CD8-positive, alpha-beta T cell (primary cell): ENCODE measurements at regions of chr21 and their contacts with region 1.

Region 1: DNA sequence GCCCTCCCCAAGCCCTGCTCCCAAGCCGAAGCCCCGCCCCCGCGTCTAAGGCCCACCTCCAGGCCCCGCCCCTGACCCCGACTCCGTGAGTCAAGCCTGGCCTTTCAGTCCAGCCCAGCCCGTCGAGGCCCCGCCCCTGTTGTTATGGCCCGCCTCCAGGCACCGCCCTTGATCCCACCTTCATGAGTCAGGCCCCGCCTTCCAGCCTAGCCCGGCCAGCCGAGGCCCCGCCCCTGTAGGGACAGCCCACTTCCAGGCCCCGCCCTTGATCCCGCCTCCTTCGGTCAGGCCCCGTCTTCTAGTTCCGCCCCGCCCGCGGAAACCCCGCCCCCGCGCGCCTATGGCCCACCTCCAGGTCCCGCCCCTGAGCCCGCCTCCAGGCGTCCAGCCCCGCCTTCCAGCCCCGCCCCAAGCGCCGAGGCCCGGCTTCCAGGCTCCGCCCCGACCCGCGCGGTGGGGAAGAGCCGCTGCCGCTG is 247 bp upstream of the DOP1B start:
- DNase-seq: peak; percentile 98 to 100 (median 100)
- ATAC-seq: peak; percentile 89
- H3K4me3 ChIP-seq: peak overlapping the region; percentile 76 to 78
- H3K4me3 Mint-ChIP-seq: peak overlapping the region; percentile 83
- H3K27ac ChIP-seq: peak overlapping the region; percentile 65 to 68
- H3K27ac Mint-ChIP-seq: peak overlapping the region; percentile 72
- H3K4me1 ChIP-seq: peaks cover 24% of the 10 kb centered on the region
- H3K4me1 Mint-ChIP-seq: peaks cover 33% of the 10 kb centered on the region
- H3K27me3 ChIP-seq: no peaks in the 10 kb centered on the region
- H3K27me3 Mint-ChIP-seq: no peaks in the 10 kb centered on the region
- CTCF ChIP-seq: no peak

Region 2: GRCh38 chr21:35051287-35051818 is 1105.0 kb before region 1 on chr21:
- CTCF ChIA-PET with region 1: no interaction called
- POLR2A ChIA-PET with region 1: no interaction called
- intact Hi-C with region 1: no loop called
- DNase-seq: peak; percentile 68 to 94 (median 84)
- ATAC-seq: peak; percentile 41
- H3K4me3 ChIP-seq: no peak overlapping the region
- H3K4me3 Mint-ChIP-seq: peak overlapping the region; percentile 95
- H3K27ac ChIP-seq: peak overlapping the region in 1 of 2 experiments; percentile 79
- H3K27ac Mint-ChIP-seq: peak overlapping the region; percentile 97
- H3K4me1 ChIP-seq: peaks cover 29% of the 10 kb centered on the region
- H3K4me1 Mint-ChIP-seq: peaks cover 49% of the 10 kb centered on the region
- H3K27me3 ChIP-seq: no peaks in the 10 kb centered on the region
- H3K27me3 Mint-ChIP-seq: no peaks in the 10 kb centered on the region
- CTCF ChIP-seq: peak; percentile 58

Region 3: GRCh38 chr21:36069713-36070573 is 86.4 kb before region 1 on chr21 and contains the start of gene CBR1:
- CTCF ChIA-PET with region 1: interaction called, 3 read pairs
- POLR2A ChIA-PET with region 1: no interaction called
- intact Hi-C with region 1: loop called in 1 of 2 experiments (anchors 1 kb)
- DNase-seq: peak; percentile 69 to 94 (median 85)
- ATAC-seq: peak; percentile 98
- H3K4me3 ChIP-seq: peak within 1 kb of the TSS; percentile 59 to 77
- H3K4me3 Mint-ChIP-seq: peak within 1 kb of the TSS; percentile 88
- H3K27ac ChIP-seq: peak within 1 kb of the TSS; percentile 12 to 54
- H3K27ac Mint-ChIP-seq: peak within 1 kb of the TSS; percentile 73
- H3K4me1 ChIP-seq: peaks cover 28% of the 10 kb centered on the region
- H3K4me1 Mint-ChIP-seq: peaks cover 40% of the 10 kb centered on the region
- H3K27me3 ChIP-seq: no peaks in the 10 kb centered on the region
- H3K27me3 Mint-ChIP-seq: no peaks in the 10 kb centered on the region
- CTCF ChIP-seq: no peak
- total RNA-seq, gene CBR1: 4.5 to 5.0 TPM

Region 4: DNA sequence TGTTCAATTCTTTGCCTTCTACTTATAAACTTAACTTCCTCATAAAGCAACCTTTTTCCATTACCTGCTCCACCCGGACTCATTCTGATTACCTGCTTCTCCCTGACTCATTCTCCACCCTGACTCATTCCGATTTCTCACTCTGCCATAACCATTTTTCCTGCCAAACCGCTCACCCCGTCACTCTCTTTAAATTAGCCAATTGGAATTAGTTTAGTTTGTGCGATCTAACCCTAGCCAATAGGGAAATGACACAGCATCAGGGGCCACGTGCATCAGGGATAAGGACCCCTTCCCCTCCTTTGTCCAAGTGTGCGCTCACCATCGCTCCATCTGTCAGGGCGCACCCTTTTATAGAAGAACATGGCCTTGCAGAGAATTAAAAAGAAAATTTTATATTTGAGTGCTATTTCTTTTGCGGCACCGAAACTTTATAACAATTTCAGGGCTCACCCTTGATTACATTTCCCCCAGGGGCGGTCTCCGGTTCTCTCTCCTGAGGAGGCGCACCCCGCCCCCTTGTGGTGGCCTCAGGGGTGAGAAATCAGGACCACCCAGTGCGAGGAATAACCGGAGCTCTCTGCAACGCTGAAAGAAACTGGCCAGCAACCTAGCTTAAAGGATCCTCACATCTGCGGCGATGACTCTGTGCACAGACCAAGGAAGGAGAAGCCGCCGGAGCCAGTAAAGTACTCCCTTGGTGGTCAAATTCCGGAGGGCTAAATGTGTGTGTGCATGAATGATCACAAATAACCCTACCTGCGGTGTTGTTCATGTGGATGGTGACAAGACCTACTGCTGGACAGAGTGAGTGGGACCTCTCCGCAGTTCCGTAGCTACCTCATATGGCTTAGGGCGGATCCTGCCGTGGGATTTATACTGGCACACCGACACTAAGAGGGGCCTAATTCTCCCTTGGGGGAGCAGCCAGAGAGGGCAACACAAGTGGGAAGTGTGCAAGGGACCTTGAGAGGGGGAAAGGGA is 51.8 kb before region 1 on chr21:
- CTCF ChIA-PET with region 1: no interaction called
- POLR2A ChIA-PET with region 1: no interaction called
- intact Hi-C with region 1: no loop called
- DNase-seq: peak; percentile 20 to 79 (median 69)
- ATAC-seq: peak; percentile 87
- H3K4me3 ChIP-seq: no peak overlapping the region
- H3K4me3 Mint-ChIP-seq: peak overlapping the region; percentile 3
- H3K27ac ChIP-seq: no peak overlapping the region
- H3K27ac Mint-ChIP-seq: no peak overlapping the region
- H3K4me1 ChIP-seq: no peaks in the 10 kb centered on the region
- H3K4me1 Mint-ChIP-seq: peaks cover 7% of the 10 kb centered on the region
- H3K27me3 ChIP-seq: peaks cover 0 to 7% of the 10 kb centered on the region in 2 experiments
- H3K27me3 Mint-ChIP-seq: peaks cover 21% of the 10 kb centered on the region
- CTCF ChIP-seq: peak; percentile 63

Region 5: GRCh38 chr21:36141513-36141925 is 14.9 kb before region 1 on chr21:
- CTCF ChIA-PET with region 1: interaction called, 98 read pairs
- POLR2A ChIA-PET with region 1: interaction called, 3 read pairs
- intact Hi-C with region 1: loop called (anchors 1 to 2 kb)
- DNase-seq: peak; percentile 68 to 93 (median 86)
- ATAC-seq: peak; percentile 93
- H3K4me3 ChIP-seq: no peak overlapping the region
- H3K4me3 Mint-ChIP-seq: no peak overlapping the region
- H3K27ac ChIP-seq: peak overlapping the region; percentile 1 to 2
- H3K27ac Mint-ChIP-seq: peak overlapping the region; percentile 28
- H3K4me1 ChIP-seq: peaks cover 25% of the 10 kb centered on the region
- H3K4me1 Mint-ChIP-seq: peaks cover 27% of the 10 kb centered on the region
- H3K27me3 ChIP-seq: no peaks in the 10 kb centered on the region
- H3K27me3 Mint-ChIP-seq: no peaks in the 10 kb centered on the region
- CTCF ChIP-seq: peak; percentile 85

Region 6: DNA sequence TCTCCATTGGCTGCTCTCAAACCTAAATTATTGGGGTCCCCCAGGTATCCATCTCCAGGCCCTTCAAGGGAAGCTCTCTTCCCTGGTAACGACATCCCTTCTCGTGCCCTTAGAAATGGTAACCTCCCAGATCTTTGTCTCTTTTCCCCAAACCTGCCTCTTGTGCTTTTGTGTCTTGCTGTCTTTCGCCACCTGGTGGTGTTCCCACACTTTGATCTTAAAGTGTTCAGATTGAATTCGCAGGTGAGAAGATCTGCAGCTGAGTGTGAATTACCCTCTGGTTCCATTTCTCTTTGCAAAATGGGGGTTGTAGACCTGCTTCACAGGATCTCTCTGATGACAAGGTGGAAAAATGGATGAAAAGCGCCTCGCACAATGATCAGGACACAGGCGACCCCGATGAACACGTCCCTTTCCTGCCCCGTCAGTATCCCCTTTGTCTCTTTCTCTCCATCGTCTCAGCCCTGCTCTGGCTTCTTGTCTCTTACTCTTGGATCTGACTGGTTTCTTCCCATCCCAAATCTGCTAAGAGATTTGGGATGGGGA is 53.3 kb after region 1 on chr21:
- CTCF ChIA-PET with region 1: interaction called, 47 read pairs
- POLR2A ChIA-PET with region 1: no interaction called
- intact Hi-C with region 1: loop called in 1 of 2 experiments (anchors 1 kb)
- DNase-seq: peak; percentile 2 to 70 (median 46)
- ATAC-seq: no peak
- H3K4me3 ChIP-seq: no peak overlapping the region
- H3K4me3 Mint-ChIP-seq: no peak overlapping the region
- H3K27ac ChIP-seq: no peak overlapping the region
- H3K27ac Mint-ChIP-seq: no peak overlapping the region
- H3K4me1 ChIP-seq: no peaks in the 10 kb centered on the region
- H3K4me1 Mint-ChIP-seq: peaks cover 4% of the 10 kb centered on the region
- H3K27me3 ChIP-seq: no peaks in the 10 kb centered on the region
- H3K27me3 Mint-ChIP-seq: no peaks in the 10 kb centered on the region
- CTCF ChIP-seq: peak; percentile 36

Region 7: DNA sequence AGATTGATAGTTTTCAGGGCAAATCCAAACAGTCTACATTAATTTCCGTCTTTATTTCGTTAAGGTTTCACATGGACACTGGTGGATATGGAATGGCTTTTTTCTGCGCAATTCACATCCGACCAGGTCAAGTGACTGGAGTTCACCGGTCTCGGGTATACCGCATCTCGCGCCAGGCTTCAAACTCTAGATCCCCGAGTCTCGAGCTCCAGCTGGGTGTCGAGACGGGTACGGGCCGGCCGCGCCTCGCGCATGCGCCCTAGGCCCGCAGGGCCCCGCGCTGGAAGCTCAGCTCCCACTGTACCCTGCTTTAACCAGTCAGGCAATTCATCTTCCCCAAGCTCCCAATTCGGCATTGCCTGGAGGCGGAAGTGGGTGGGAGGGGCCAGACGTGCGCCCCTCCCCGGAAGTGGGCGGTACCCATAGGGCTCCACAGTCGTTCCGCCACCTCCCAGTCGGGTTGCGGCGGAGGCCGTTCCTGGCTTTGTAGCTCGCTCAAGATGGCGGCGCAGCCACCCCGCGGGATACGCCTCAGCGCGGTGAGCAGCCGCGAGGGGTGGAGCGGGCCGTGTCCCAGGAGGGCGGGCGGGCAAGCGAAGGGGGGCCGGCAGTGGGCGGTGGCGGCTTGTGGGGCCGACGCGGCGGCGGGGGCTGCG is 163.5 kb after region 1 on chr21 and contains the start of gene MORC3:
- CTCF ChIA-PET with region 1: interaction called, 5 read pairs
- POLR2A ChIA-PET with region 1: interaction called, 9 read pairs
- intact Hi-C with region 1: loop called (anchors 1 kb)
- DNase-seq: peak; percentile 96 to 99 (median 98)
- ATAC-seq: peak; percentile 87
- H3K4me3 ChIP-seq: peak within 1 kb of the TSS; percentile 63 to 74
- H3K4me3 Mint-ChIP-seq: peak within 1 kb of the TSS; percentile 94
- H3K27ac ChIP-seq: peak within 1 kb of the TSS; percentile 84 to 85
- H3K27ac Mint-ChIP-seq: peak within 1 kb of the TSS; percentile 98
- H3K4me1 ChIP-seq: peaks cover 18% of the 10 kb centered on the region
- H3K4me1 Mint-ChIP-seq: peaks cover 36% of the 10 kb centered on the region
- H3K27me3 ChIP-seq: no peaks in the 10 kb centered on the region
- H3K27me3 Mint-ChIP-seq: no peaks in the 10 kb centered on the region
- CTCF ChIP-seq: no peak
- total RNA-seq, gene MORC3: 48.7 to 52.1 TPM

Region 8: GRCh38 chr21:37072988-37073416 is 916.6 kb after region 1 on chr21 and contains the starts of genes PIGP and TTC3:
- CTCF ChIA-PET with region 1: no interaction called
- POLR2A ChIA-PET with region 1: no interaction called
- intact Hi-C with region 1: loop called (anchors 10 kb)
- DNase-seq: peak; percentile 89 to 99 (median 95)
- ATAC-seq: peak; percentile 62
- H3K4me3 ChIP-seq: peak within 1 kb of the TSS; percentile 86 to 94
- H3K4me3 Mint-ChIP-seq: peak within 1 kb of the TSS; percentile 99
- H3K27ac ChIP-seq: peak within 1 kb of the TSS; percentile 96 to 98
- H3K27ac Mint-ChIP-seq: peak within 1 kb of the TSS; percentile 99
- H3K4me1 ChIP-seq: peaks cover 30% of the 10 kb centered on the region
- H3K4me1 Mint-ChIP-seq: peaks cover 57% of the 10 kb centered on the region
- H3K27me3 ChIP-seq: no peaks in the 10 kb centered on the region
- H3K27me3 Mint-ChIP-seq: no peaks in the 10 kb centered on the region
- CTCF ChIP-seq: no peak
- total RNA-seq, gene PIGP: 11.9 to 12.2 TPM
- total RNA-seq, gene TTC3: 137 to 141 TPM